ENCODE measurements at regions of chr19 and their contacts with region 1.

Region 1: DNA sequence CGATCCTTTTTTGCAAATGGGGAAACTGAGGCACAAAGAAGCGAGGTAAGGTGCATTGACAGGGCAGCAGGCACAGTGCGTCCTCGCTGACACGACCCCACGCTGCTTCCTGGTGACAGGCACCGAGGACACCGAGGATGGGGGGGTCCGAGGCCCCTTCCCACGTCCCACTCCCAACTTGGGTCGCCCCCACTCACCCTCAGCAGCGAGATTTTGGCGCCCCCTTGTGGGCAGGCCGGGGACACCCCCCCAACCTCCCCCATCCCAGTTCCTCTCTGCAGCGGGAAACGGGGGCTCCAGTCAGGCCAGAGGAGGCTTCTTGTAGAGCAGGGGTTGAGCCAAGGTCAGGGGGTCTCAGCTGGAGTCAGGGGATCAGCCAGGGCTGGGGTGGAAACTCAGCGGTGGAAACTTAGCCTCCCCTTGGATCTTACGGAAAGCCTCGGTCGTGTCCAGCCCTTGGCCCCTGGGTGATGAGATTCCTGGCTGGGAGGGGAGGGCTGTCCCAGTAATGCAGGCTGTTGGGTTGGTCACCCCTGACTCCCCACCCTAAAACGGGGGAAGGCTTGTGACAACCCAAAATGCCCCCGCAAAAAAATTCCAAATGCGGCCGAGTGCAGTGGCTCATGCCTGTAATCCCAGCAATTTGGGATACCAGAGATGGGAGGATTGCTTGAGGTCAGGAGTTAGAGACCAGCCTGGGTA is 8.2 kb downstream of the SMIM24 start:
- DNase-seq: no peak
- H3K4me3 ChIP-seq: no peak overlapping the region
- H3K27ac ChIP-seq: peak overlapping the region in 1 of 4 donors; percentile 33
- H3K4me1 ChIP-seq: peaks cover 14 to 58% (median 46%) of the 10 kb centered on the region in 4 donors
- H3K27me3 ChIP-seq: peaks cover 0 to 19% (median 2%) of the 10 kb centered on the region in 4 donors
- CTCF ChIP-seq: peak; percentile 91 to 96 (median 94)
- EP300 ChIP-seq: no peak
- POLR2A ChIP-seq: no peak

Region 2: GRCh38 chr19:3304871-3305423 is 167.2 kb before region 1 on chr19:
- intact Hi-C with region 1: loop called (anchors 2 kb)
- DNase-seq: peak; percentile 93
- H3K4me3 ChIP-seq: no peak overlapping the region
- H3K27ac ChIP-seq: no peak overlapping the region
- H3K4me1 ChIP-seq: peaks cover 7 to 13% (median 11%) of the 10 kb centered on the region in 4 donors
- H3K27me3 ChIP-seq: peaks cover 0 to 81% (median 16%) of the 10 kb centered on the region in 4 donors
- CTCF ChIP-seq: peak; percentile 84 to 90 (median 90)
- EP300 ChIP-seq: no peak
- POLR2A ChIP-seq: no peak

Region 3: GRCh38 chr19:3324321-3324856 is 147.7 kb before region 1 on chr19:
- intact Hi-C with region 1: loop called (anchors 1 kb)
- DNase-seq: no peak
- H3K4me3 ChIP-seq: no peak overlapping the region
- H3K27ac ChIP-seq: no peak overlapping the region
- H3K4me1 ChIP-seq: peaks cover 0 to 15% (median 5%) of the 10 kb centered on the region in 4 donors
- H3K27me3 ChIP-seq: peaks cover 0 to 22% (median 0%) of the 10 kb centered on the region in 4 donors
- CTCF ChIP-seq: peak; percentile 63 to 78 (median 73)
- EP300 ChIP-seq: no peak
- POLR2A ChIP-seq: no peak

Region 4: DNA sequence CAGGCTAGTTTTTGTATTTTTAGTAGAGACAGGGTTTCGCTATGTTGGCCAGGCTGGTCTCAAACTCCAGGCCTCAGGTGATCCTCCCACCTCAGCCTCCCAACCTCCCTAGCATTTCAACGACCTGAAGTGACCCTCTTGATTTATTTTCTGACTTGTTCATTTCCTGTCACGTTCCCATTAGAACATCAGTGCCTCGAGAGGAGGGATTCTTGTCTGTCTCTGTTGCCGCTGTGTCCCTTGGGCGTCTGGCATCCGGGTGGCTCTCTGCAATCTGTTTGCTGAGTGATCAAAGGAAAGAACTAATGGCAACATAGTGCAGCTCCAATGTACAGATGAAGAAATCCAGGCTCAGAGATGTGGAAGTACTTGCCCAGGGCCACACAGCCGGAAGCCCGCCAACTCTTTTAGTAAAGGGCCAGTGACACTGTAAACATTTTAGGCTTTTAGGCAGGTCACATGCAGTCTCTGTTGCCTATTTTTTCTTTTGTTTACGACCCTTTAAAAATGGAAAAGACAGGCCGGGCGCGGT is 58.2 kb before region 1 on chr19:
- intact Hi-C with region 1: no loop called
- DNase-seq: no peak
- H3K4me3 ChIP-seq: no peak overlapping the region
- H3K27ac ChIP-seq: peak overlapping the region; percentile 95 to 100 (median 99)
- H3K4me1 ChIP-seq: peaks cover 15 to 83% (median 69%) of the 10 kb centered on the region in 4 donors
- H3K27me3 ChIP-seq: no peaks in the 10 kb centered on the region
- CTCF ChIP-seq: no peak
- EP300 ChIP-seq: no peak
- POLR2A ChIP-seq: no peak

Region 5: GRCh38 chr19:3557461-3558248 is 85.5 kb after region 1 on chr19 and contains the start of gene MFSD12:
- intact Hi-C with region 1: no loop called
- DNase-seq: peak; percentile 98
- H3K4me3 ChIP-seq: peak within 1 kb of the TSS; percentile 70 to 95 (median 84)
- H3K27ac ChIP-seq: peak within 1 kb of the TSS; percentile 82 to 87 (median 84)
- H3K4me1 ChIP-seq: peaks cover 27 to 54% (median 53%) of the 10 kb centered on the region in 4 donors
- H3K27me3 ChIP-seq: no peaks in the 10 kb centered on the region
- CTCF ChIP-seq: peak in 1 of 3 experiments; percentile 25
- EP300 ChIP-seq: no peak
- POLR2A ChIP-seq: no peak
- total RNA-seq, gene MFSD12: 28.2 to 87.0 (median 62.4) TPM

Region 6: DNA sequence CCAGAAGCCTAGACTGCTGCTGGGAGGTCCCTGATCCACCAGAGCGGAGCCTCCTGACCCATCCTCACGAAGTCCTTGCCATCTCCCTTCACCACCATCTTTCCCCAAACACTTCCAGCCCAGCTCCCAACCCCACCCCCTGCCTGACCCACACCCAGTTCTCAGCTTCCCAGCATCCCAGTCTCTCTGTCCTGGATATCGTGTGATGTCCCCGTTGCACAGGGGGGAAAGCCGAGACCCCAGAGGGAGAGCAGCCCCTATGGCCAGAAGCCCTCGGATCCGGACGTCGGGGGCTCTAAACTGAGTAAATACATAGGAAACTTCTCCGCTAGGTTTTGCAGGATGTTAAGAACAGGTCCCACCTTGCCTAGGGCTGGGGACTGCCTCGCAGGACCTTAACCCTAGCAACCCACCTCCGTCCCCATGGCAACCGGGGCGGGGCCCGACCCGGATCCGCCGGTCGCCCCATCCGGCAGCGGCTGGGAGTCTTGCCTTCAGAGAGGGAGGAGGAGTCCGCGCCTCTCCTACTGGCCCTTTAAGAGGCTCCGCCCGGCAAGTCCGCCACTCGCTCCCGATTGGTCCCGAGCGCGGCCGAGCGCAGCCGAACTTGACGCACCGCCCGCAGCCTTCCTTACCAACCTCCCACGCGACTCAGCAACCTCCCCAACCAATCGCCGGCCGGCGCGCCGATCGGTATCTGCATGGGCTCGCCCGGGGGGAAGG is 100.2 kb after region 1 on chr19:
- intact Hi-C with region 1: no loop called
- DNase-seq: peak; percentile 100
- H3K4me3 ChIP-seq: peak overlapping the region; percentile 82 to 98 (median 94)
- H3K27ac ChIP-seq: peak overlapping the region; percentile 56 to 96 (median 88)
- H3K4me1 ChIP-seq: peaks cover 21 to 52% (median 48%) of the 10 kb centered on the region in 4 donors
- H3K27me3 ChIP-seq: no peaks in the 10 kb centered on the region
- CTCF ChIP-seq: no peak
- EP300 ChIP-seq: no peak
- POLR2A ChIP-seq: no peak